Astrocyte of the cerebellum (primary cell): ENCODE measurements at regions of chr6 and their contacts with region 1.

Region 1: DNA sequence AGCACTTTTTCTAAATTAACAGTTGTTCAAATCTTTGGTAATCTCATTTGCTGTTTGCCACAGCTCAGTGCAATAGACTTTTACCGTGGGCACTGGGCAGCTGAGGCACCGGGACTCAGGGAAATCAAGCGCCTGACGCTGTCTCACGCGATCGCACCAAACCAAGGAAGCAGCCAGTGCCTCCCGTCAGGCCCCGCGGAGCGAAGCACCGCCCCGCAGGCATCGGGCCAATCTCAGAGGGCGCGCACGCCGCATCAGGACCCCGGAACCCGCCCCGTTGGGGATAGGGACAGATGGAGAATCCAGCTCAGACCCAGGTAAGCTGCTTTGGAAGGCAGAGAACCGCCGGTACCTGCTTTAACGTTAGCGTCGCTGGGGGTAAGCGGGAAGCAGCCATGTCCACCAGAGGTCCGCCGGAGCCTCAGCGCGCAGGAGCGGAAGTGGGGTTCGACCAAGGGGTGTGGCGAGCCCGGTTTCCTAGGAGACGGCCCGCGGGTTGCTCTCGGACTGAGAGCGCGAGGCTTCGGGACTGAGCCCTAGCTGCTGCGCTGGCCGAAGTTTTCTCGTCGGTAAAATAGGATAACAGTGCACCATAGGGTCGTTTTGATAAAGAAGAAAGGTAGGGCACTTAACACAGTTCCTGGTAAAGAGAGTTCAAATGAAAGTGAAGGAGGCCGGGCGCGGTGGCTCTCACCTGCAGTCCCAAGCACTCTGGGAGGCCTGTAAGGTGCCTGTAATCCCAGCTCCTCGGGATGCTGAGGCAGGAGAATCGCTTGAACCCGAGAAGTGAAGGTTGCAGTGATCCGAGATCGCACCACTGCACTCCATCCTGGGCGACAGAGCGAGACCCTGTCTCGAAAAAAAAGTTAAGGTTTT is at the start of gene LYRM2:
- DNase-seq: peak; percentile 83
- H3K4me3 ChIP-seq: peak within 1 kb of the TSS; percentile 72
- CTCF ChIP-seq: peak; percentile 16

Region 2: GRCh38 chr6:89368107-89368506 is 270.5 kb before region 1 on chr6:
- in situ Hi-C with region 1: loop called (anchors 10 kb)
- DNase-seq: no peak
- H3K4me3 ChIP-seq: no peak overlapping the region
- CTCF ChIP-seq: peak; percentile 86

Region 3: GRCh38 chr6:89432875-89433251 is 205.7 kb before region 1 on chr6 and contains the start of gene ANKRD6:
- in situ Hi-C with region 1: loop called (anchors 10 kb)
- DNase-seq: no peak
- H3K4me3 ChIP-seq: peak within 1 kb of the TSS; percentile 59
- CTCF ChIP-seq: peak; percentile 74

Region 4: DNA sequence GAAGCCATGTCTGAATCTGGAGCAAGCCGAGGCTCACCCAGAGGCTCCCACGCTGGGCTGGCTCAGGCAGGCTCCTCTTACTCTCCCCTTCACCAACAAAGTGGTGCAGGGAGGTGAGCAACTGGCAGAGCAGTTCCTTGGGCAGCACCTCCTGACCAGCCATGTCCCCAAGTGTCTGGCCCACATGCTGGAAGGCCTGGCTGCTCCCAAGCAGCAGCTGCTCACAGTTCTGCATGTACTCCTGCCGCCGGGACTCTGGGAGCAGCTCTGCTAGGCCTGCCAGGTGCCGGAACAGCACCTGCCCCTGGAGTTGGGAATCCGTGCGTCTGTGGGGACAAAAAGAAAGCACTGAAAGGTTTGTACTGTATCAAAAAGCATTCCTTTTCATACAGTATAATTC is 57.1 kb after region 1 on chr6:
- in situ Hi-C with region 1: no loop called
- DNase-seq: no peak
- H3K4me3 ChIP-seq: no peak overlapping the region
- CTCF ChIP-seq: no peak